ENCODE measurements at regions of chr1 and their contacts with region 1.

Region 1: DNA sequence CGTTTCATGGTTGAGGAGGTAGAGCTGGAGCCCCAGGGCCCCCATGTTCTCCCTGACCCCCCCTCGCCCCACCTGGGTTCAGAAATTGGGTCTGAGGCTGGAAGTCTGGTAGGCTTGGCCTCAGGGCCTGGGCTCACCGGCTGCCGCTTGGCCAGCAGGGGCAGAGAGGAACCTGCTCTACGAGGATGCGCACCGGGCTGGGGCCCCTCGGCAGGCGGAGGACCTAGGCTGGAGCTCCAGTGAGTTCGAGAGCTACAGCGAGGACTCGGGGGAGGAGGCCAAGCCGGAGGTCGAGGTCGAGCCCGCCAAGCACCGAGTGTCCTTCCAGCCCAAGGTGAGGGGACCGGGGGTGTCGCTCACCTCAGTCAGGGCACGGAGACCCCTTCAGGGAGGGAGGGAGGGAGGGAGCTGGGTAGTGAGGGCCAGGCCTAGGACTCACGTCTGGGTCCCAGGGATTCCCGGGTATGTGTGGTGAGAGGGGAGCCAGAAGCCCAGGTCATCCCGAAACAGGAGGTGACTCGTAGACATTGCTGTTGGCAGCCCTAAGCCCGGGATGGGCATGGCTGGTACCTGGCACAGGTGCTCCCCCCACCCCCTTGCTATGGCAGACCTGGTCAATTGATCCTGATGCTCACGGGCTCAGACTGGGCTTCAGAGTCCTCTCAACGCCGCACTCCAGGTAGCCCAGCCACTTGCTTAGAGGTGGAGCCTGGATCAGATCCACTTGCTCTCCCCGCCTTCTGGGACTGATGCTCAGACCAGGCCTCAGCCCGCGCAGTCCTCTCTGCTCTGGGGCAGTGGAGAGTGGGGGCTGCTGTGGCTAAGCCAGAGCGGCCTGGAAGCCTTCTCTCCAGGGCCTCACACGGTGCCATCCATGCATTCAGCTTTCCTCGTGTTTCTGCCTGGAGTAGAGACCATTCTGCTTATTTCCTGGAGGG is 68.4 kb downstream of the ARHGEF10L start:
- DNase-seq: no peak

Region 2: GRCh38 chr1:17419626-17420328 is 188.1 kb before region 1 on chr1:
- intact Hi-C with region 1: no loop called
- DNase-seq: peak in 41 of 42 donors; percentile 35 to 88 (median 72)

Region 3: DNA sequence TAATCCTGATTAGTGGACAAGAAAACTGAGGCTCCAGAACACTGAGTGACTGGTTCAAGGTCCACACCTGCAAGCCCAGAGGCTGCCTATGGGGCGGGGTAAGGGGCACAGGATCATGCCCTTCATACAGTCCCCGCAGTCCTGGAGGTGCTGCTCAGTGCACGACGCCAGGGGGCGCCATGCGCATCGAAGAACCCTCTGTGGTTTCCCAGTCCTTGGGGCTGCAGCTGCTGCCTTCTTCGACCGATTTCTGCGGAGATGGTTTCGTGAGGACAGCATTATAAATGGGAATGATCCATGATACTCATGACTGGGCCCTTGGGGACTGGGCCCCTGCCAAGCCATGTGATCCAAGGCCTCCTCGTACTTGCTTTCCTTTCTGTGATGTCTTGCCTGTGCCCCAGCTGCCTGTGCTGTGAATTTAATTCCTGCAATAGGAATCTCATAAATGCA is 105.6 kb before region 1 on chr1:
- intact Hi-C with region 1: loop called (anchors 2 kb)
- DNase-seq: peak; percentile 46 to 96 (median 88)

Region 4: GRCh38 chr1:17551755-17552234 is 56.1 kb before region 1 on chr1:
- intact Hi-C with region 1: no loop called
- DNase-seq: peak in 3 of 42 donors; percentile 31 to 46 (median 37)

Region 5: GRCh38 chr1:17719874-17720273 is 112.0 kb after region 1 on chr1:
- intact Hi-C with region 1: no loop called
- DNase-seq: no peak

Measured in head of caudate nucleus (tissue), 42 donors.